Caco-2 (cell line): ENCODE measurements at regions of chr10 and their contacts with region 1.

Region 1: GRCh38 chr10:76025124-76025477 is 593.7 kb downstream of the LRMDA start:
- DNase-seq: no peak
- H3K4me3 ChIP-seq: no peak overlapping the region
- H3K4me3 Mint-ChIP-seq: no peak overlapping the region
- H3K27ac Mint-ChIP-seq: no peak overlapping the region
- H3K4me1 ChIP-seq: no peaks in the 10 kb centered on the region
- H3K4me1 Mint-ChIP-seq: no peaks in the 10 kb centered on the region
- H3K27me3 ChIP-seq: no peaks in the 10 kb centered on the region
- H3K27me3 Mint-ChIP-seq: no peaks in the 10 kb centered on the region
- CTCF ChIP-seq: no peak

Region 2: DNA sequence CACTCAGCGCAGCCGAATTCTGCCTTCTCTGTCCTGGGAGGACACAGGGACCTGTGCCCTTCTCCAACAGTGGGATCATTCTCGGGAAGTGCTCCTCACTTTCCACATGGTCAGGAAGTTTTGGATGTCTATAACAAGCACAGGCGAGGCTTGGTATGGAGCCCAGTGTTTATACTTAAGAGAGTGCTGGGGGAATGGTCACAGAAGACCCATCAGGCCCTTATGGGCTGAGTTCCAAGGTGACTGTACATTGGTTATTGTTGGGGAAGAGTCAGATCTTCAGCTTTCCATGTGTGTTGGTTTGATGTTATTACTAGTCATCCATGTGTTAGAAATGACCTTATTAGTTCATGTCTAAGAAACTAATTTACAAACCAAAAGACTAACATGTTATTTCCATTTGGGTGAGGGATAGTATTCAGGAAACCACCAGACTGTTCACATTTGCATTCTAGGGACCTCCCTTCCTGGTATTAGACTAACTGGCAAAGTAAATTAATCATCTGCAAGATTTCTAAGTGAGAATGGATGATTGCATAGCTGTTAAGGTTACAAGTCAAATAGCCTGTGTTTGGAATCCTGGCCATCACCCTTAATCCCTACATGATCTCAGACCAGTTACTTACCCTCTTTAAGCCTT is 240.5 kb after region 1 on chr10:
- CTCF ChIA-PET with region 1: no interaction called
- POLR2A ChIA-PET with region 1: interaction called, 10 read pairs
- intact Hi-C with region 1: no loop called
- DNase-seq: no peak
- H3K4me3 ChIP-seq: no peak overlapping the region
- H3K4me3 Mint-ChIP-seq: no peak overlapping the region
- H3K27ac Mint-ChIP-seq: no peak overlapping the region
- H3K4me1 ChIP-seq: no peaks in the 10 kb centered on the region
- H3K4me1 Mint-ChIP-seq: peaks cover 9% of the 10 kb centered on the region
- H3K27me3 ChIP-seq: no peaks in the 10 kb centered on the region
- H3K27me3 Mint-ChIP-seq: no peaks in the 10 kb centered on the region
- CTCF ChIP-seq: no peak